ENCODE measurements at regions of chr14 and their contacts with region 1.

Region 1: DNA sequence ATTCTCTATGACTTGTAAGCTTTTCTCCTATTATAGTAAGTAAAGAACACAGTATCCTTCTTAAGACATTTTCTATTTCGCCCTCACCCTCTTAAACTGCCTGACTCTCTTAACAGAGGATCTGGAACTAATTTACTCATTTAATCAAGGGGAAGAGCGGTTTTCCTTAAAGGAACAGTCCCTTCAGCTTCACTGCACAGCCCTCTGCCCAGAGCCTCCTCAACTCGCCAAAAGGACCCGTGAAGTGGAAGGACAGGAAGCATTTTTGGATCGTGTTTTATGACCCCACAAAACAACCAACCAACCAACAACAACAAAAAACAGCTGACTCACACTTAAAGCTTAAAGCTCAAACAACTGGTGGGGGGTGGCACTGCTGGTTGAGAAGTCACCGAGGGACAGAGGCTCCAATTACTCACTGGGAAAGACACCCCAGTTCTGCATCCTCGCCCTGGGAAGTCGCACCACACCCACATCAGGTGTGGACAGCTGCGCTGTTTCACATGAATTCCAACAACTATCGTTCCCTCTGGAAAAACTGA is 35.7 kb downstream of the NID2 start:
- DNase-seq: no peak
- ATAC-seq: no peak
- H3K4me3 ChIP-seq: no peak overlapping the region
- H3K27ac ChIP-seq: peak overlapping the region in 1 of 2 experiments; percentile 37; a peak in 1 of 6 replicates
- H3K4me1 ChIP-seq: peaks cover 9% of the 10 kb centered on the region; the same call in 1 of the 3 replicates
- CTCF ChIP-seq: no peak
- EP300 ChIP-seq: no peak
- POLR2A ChIP-seq: no peak
- RAD21 ChIP-seq: no peak

Region 2: GRCh38 chr14:52043690-52044089 is 10.5 kb after region 1 on chr14:
- CTCF ChIA-PET with region 1: interaction called, 10 read pairs
- POLR2A ChIA-PET with region 1: no interaction called
- DNase-seq: peak; percentile 60 to 73
- ATAC-seq: peak; percentile 86 to 98
- H3K4me3 ChIP-seq: no peak overlapping the region
- H3K27ac ChIP-seq: no peak overlapping the region
- H3K4me1 ChIP-seq: peaks cover 19% of the 10 kb centered on the region
- CTCF ChIP-seq: peak; percentile 55
- EP300 ChIP-seq: no peak
- POLR2A ChIP-seq: no peak
- RAD21 ChIP-seq: peak; percentile 64